GM18951 (cell line): ENCODE measurements at regions of chr19 and their contacts with region 1.

Region 1: DNA sequence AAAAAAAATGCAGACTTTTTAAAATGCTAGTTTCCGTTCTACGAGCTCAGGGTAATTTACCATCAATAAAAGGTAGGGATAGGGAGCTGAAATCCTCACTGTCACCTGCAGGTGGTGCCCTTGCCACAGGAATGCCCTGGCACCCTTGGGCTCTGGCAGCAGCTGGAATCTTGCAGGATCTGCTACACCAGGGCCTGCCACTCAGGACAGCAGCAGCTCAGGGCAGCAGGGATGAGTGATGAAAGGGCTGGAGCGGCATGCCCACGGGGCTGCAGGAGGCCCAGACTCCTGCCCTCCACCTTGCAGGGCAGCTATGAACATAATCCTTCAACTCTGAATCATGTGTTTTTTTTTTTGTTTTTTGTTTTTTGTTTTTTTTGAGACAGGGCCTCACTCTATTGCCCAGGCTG is 54.0 kb downstream of the GNG7 start:
- POLR2A ChIP-seq: no peak

Region 2: DNA sequence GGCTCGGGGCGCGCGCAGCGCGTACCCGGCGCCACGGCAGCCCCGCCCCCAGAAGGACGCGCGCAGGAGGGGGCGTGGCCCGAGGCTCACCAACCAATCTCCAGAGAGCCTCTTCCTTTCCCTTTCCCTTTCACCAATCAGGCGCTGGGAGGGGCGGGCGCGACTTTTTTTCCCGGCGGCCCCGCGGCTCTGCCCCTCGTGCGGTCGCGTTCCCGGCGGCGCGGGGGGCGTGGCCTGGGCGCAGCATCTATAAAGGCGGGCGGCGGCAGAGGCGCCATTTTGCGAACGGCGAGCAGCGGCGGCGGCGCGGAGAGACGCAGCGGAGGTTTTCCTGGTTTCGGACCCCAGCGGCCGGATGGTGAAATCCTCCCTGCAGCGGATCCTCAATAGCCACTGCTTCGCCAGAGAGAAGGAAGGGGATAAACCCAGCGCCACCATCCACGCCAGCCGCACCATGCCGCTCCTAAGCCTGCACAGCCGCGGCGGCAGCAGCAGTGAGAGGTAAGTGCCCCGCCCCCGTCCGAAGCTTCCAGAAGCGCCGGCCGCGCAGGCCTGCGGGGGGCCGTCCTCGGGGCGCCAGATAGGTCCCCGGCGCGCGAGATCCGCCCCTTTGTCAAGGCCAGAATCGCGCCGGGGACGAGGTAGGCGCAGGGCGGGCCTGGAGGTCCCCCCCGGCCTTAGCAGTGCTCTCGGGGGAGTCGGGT is 379.1 kb before region 1 on chr19:
- in situ Hi-C with region 1: no loop called
- POLR2A ChIP-seq: peak; percentile 99

Region 3: GRCh38 chr19:2747349-2747748 is 98.8 kb after region 1 on chr19:
- in situ Hi-C with region 1: loop called (anchors 5 kb)
- POLR2A ChIP-seq: no peak